ENCODE measurements at regions of chr12 and their contacts with region 1.

Region 1: DNA sequence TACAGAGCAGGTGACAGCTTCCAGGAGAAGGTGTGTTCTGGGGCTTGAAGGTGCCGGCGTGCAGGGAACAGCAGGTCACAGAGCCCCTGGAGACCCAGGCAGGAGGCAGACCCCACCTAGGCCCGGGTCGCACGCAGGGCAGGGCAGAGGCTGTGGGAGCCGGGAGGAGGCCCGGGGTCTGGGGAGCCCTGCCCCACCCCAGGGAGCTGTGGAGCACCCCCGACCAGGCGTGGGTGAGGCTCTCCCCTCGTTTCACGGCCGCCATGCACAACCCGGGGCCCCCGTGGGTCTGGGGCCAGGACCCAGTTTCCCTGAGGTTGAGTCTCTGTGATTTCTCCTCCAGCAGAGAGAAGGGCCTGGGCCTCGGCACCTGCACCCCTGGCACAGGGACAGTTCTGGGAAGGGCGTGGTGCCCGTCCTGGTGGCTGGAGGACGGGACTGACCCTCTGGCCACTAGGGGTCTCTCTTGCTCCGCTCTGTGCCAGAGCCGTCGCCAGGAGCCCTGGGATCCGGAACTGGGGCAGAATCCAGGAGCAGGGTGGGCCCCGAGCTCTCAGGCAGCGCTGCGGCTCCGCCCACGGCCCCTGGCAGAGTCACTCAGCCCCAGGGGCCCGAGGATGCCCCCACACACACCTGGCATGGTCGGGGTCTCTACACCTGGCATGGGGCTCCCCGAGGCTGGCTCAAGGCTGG is 75.2 kb upstream of the FBRSL1 start:
- DNase-seq: peak; percentile 85 to 96 (median 92)
- ATAC-seq: peak; percentile 96 to 99 (median 98)
- H3K4me3 ChIP-seq: no peak overlapping the region
- H3K27ac ChIP-seq: no peak overlapping the region
- H3K4me1 ChIP-seq: peaks cover 0 to 7% (median 0%) of the 10 kb centered on the region in 3 donors
- H3K27me3 ChIP-seq: no peaks in the 10 kb centered on the region
- CTCF ChIP-seq: peak; percentile 88 to 96 (median 94)

Region 2: GRCh38 chr12:131949431-131950181 is 465.2 kb before region 1 on chr12 and contains the start of gene EP400:
- intact Hi-C with region 1: no loop called
- DNase-seq: peak; percentile 93 to 97 (median 96)
- ATAC-seq: peak; percentile 95 to 98 (median 98)
- H3K4me3 ChIP-seq: peak within 1 kb of the TSS; percentile 90 to 99 (median 97)
- H3K27ac ChIP-seq: peak within 1 kb of the TSS; percentile 33 to 39 (median 36)
- H3K4me1 ChIP-seq: peaks cover 7 to 13% (median 7%) of the 10 kb centered on the region in 3 donors
- H3K27me3 ChIP-seq: no peaks in the 10 kb centered on the region
- CTCF ChIP-seq: peak; percentile 19 to 53 (median 28)
- total RNA-seq, gene EP400: 16.1 to 24.3 (median 16.7) TPM

Region 3: DNA sequence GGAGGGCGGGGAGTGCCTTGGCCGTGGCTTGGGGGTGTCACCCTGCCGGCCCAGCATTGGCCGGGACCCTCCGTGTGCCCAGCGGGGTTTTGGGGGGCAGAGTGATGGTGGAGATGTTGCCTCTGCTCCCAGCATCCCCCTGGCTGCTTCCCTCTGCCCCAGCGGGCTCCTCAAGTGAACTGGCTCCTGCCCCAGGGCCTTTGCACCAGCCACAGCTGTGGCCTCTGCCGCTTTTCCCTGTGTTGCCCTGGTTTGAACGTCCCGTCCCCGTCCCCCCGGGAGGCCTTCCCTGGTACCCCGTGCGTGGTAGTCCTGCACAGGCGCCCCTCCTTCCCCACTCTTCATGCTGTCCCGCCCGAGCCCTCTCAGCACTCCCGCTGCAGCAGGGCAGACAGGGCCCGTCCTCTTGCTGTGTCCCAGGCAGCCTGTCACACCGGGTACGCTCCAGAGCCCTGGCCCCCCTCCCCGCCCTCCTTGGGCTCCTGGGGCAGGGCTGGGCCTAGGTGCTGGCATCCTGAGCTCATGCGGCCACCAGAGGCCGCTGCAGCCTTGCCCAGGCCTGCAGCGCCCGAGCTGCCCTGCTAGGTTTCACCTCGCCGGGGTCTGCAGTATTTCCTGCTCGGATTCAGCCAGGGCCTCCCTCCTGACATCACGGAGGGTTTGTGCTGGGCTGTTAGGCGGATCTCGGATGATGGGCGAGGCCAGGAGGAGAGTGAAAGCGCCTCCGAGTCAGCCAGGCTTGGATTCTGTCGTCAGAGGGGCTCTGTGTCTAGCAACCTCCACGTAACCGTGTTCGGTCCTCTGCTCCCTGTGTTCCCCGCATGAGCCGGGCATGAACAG is 261.1 kb before region 1 on chr12:
- intact Hi-C with region 1: loop called in 1 of 3 experiments (anchors 10 kb)
- DNase-seq: peak in 5 of 6 donors; percentile 43 to 85 (median 69)
- ATAC-seq: peak; percentile 91 to 97 (median 95)
- H3K4me3 ChIP-seq: no peak overlapping the region
- H3K27ac ChIP-seq: no peak overlapping the region
- H3K4me1 ChIP-seq: no peaks in the 10 kb centered on the region
- H3K27me3 ChIP-seq: no peaks in the 10 kb centered on the region
- CTCF ChIP-seq: peak; percentile 71 to 93 (median 86)

Region 4: DNA sequence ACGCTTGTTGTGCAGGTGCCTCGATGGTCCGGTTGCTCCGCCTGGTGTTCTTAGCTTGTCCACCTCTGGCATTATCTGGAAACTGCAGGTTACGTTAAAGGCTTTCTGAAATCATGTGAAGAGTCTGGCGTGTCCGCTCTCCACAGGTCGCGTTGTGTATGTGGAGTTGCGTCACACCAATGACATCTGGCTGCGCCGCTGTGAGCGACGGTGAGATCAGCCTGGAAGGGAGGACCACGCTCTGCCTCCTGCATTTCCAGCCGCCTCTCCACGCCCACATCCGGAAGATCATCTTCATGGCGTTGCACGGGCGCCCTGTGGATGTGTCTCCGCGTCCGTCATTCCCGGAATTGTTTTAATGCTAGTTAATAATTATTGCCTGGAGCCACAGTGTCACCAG is 34.8 kb before region 1 on chr12:
- intact Hi-C with region 1: no loop called
- DNase-seq: peak in 2 of 6 donors; percentile 13 to 38
- ATAC-seq: no peak
- H3K4me3 ChIP-seq: no peak overlapping the region
- H3K27ac ChIP-seq: no peak overlapping the region
- H3K4me1 ChIP-seq: no peaks in the 10 kb centered on the region
- H3K27me3 ChIP-seq: peaks cover 0 to 20% (median 0%) of the 10 kb centered on the region in 4 donors
- CTCF ChIP-seq: no peak

Region 5: DNA sequence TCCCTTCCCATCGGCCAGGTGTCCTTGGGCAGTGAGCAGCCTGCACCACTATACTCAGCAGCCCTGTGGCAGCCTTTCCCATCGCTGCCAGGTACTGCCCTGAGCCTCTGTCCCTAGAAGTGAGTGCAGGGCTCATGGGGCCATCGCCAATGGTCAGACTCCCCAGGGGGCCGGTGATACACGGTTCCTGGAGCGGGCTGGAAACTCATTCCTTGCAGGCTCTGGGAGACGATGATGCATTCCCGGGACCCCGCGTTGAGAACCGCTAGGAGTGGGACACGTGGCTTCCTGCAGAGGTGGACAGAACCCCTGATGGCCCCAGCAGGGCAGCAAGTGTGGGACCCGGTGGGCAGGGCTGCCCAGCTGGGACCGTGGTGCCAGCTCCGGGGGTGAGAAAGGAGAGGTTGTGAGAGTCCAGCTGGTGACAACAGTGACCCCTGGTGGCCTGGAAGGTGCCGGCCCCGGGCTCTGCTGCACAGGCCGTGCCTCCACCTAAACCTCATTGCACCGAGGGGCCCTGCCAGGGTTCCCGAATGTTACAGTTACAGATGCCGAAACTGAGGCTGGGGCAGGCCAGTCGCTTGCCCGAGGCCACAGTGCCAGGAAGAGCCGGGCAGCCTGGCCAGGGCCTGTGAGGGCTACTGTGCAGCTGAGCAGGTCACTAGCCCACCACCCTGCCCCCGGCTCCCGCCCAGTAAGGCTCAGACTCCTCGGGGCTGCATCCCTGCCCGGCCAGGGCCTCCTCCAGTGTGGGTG is 109.0 kb after region 1 on chr12:
- intact Hi-C with region 1: loop called in 2 of 3 experiments (anchors 2 to 5 kb)
- DNase-seq: peak in 5 of 6 donors; percentile 61 to 89 (median 78)
- ATAC-seq: peak; percentile 67 to 87 (median 81)
- H3K4me3 ChIP-seq: no peak overlapping the region
- H3K27ac ChIP-seq: no peak overlapping the region
- H3K4me1 ChIP-seq: no peaks in the 10 kb centered on the region
- H3K27me3 ChIP-seq: no peaks in the 10 kb centered on the region
- CTCF ChIP-seq: peak; percentile 64 to 83 (median 74)

Region 6: GRCh38 chr12:132614861-132615578 is 200.2 kb after region 1 on chr12:
- intact Hi-C with region 1: loop called in 2 of 3 experiments (anchors 5 to 10 kb)
- DNase-seq: peak; percentile 68 to 90 (median 81)
- ATAC-seq: peak; percentile 86 to 92 (median 89)
- H3K4me3 ChIP-seq: no peak overlapping the region
- H3K27ac ChIP-seq: no peak overlapping the region
- H3K4me1 ChIP-seq: no peaks in the 10 kb centered on the region
- H3K27me3 ChIP-seq: peaks cover 0 to 33% (median 15%) of the 10 kb centered on the region in 4 donors
- CTCF ChIP-seq: peak; percentile 78 to 92 (median 82)

Measured in pancreas (tissue), 10 donors.